Lower leg skin (tissue), 4 donors: ENCODE measurements at regions of chr6 and their contacts with region 1.

Region 1: DNA sequence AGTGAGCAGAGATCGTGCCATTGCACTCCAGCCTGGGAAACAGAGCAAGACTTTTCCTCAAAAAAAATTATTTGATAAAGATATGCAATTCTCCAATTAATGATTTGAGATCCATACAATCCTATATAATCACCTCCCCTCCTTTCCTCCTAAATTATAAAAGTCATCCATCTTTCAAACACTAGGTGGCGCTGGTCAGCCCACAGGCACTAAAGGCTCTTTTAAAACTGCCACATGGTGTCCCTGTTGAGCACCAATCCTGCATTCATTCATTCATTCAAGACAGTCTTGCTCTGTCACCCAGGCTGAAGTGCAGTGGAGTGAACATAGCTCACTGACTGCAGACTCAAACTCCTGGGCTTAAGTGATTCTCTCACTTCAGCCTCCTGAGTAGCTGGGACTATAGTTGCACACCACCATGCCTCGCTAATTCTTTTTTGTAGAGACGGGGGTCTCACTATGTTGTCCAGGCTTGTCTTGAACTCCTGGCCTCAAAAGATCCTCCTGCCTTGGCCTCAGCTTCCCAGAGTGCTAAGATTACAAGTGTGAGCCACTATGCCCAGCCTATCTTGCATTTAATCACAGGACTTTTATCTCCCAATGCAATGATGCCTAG is 58.7 kb upstream of the SLC2A12 start:
- DNase-seq: no peak
- H3K4me3 ChIP-seq: no peak overlapping the region
- CTCF ChIP-seq: no peak
- POLR2A ChIP-seq: no peak

Region 2: DNA sequence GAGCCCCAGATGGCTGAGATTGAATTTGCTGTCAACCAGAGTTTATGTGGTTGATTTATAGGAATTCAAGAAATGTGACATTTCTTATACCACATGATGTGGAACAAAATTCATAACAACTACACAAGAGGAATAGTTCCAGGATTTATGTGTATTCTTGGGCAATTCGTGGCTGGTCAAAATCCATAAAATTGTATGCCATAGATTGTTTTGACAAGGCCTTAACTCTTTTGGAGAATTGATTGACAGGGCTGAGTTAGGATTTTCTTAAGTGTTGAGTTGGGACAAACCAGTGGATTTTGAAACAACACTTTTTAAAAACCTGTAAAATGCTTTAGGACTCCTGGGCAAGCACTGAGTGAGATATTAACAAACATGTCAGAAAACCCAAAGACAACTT is 39.3 kb before region 1 on chr6:
- intact Hi-C with region 1: loop called (anchors 1 kb)
- DNase-seq: no peak
- H3K4me3 ChIP-seq: no peak overlapping the region
- CTCF ChIP-seq: no peak
- POLR2A ChIP-seq: no peak